Panc1 (cell line): ENCODE measurements at regions of chr4 and their contacts with region 1.

Region 1: DNA sequence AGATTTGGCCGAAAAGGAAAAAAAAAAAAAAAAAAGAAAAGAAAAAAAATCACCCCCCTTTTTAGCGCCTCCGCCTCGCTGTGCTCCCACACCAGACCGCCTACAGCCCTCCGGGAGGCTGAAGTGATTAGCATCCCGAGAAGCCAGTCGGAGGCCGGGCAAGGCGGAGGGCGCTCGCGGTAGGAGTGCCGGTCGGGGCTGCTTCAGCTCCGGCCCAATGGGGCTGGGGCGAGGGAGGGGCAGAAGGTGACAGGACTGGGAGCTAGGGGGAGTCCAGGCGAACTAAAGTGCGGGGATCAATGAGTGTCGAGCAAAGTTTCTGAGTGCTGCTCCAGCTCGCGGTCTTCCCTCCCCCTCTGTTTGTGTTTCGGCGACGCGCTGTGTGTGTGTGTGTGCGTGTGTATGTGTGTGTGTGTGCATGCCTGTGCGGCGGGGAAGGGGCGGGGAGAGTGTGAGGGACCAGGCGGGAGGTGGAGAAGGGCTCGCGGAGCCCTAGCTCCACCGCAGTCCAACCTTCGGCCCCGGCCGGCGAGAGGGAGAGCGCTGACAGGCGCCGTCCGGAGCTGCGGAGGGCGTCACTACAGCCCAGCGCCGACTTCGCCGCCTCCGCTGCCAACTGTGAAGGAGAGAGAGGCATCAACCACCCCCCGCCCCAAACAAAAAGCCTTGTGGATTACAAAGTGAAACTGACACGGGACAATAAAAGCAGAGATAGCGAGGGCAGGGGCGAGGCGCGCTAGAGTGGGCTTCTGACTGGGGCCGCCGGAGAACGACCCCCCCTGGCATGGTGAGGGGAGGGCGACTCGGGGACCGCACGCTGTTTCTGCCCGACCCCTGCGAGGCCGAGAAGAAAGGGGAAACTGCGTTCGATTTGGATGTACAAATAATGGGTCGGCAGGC is at the start of gene FAT4:
- DNase-seq: no peak
- ATAC-seq: peak; percentile 88
- H3K4me3 ChIP-seq: peak within 1 kb of the TSS; percentile 54 to 78
- H3K27ac ChIP-seq: peak within 1 kb of the TSS; percentile 76
- H3K4me1 ChIP-seq: peaks cover 18% of the 10 kb centered on the region
- H3K27me3 ChIP-seq: no peaks in the 10 kb centered on the region
- CTCF ChIP-seq: no peak
- total RNA-seq, gene FAT4: 11.8 TPM

Region 2: DNA sequence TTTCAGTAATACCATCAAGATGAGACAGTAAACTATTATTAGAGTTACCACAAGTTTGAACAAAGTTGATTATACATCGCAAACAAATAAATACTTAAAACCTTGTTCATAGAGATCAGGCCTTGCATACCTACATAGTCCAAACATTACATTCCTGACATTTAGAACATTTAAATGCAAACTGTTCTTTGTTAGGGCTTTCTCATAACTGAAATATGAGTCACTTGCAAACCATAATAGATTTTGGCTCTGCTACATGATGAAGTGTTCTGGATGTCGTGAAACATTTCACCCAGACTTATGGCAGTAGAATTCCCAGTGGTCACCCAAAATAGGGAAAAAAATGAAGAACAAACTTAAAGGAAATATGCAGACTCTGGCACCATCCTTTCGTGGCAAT is 74.8 kb after region 1 on chr4:
- CTCF ChIA-PET with region 1: no interaction called
- POLR2A ChIA-PET with region 1: no interaction called
- in situ Hi-C with region 1: no loop called
- intact Hi-C with region 1: no loop called
- DNase-seq: peak; percentile 68
- ATAC-seq: peak; percentile 94
- H3K4me3 ChIP-seq: peak overlapping the region in 1 of 2 experiments; percentile 12; a peak in 2 of 4 replicates
- H3K27ac ChIP-seq: peak overlapping the region; percentile 87
- H3K4me1 ChIP-seq: peaks cover 21% of the 10 kb centered on the region
- H3K27me3 ChIP-seq: no peaks in the 10 kb centered on the region
- CTCF ChIP-seq: no peak

Region 3: DNA sequence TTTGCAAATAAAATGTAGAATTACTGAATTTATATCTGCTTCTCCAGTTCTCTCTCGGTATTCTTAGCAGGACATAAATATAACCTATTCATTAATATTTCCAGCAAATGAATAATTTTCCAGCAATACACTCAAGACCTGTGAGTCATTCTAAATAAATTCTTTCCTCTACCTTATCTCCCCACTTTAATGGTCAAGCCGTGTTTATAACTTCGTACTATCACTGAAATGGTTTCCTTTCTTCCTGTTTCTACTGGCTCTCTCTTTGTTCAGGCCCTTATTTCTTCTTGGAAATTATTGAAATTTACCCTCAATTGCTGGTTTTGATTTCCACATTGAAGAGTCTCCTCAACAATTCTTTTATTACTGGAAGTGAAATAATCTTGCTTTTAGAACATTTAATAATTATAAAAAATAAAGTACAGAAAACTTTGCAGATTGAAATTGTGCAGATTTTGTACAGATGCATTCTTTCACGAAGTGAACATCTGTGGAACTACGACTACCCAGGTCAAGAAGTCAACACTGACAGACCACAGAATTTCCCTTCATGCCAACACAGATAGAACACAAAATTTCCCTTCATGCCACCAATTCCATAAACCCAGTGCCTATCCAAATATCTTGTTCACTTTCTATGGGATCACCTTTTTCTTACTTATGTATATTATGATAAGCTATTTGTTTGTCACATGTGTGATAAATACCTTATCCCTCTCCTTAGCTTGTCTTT is 205.5 kb after region 1 on chr4:
- CTCF ChIA-PET with region 1: no interaction called
- POLR2A ChIA-PET with region 1: no interaction called
- in situ Hi-C with region 1: no loop called
- intact Hi-C with region 1: loop called (anchors 5 kb)
- DNase-seq: no peak
- ATAC-seq: peak; percentile 75
- H3K4me3 ChIP-seq: no peak overlapping the region
- H3K27ac ChIP-seq: peak overlapping the region; percentile 63
- H3K4me1 ChIP-seq: peaks cover 8% of the 10 kb centered on the region
- H3K27me3 ChIP-seq: no peaks in the 10 kb centered on the region
- CTCF ChIP-seq: no peak

Region 4: GRCh38 chr4:125750828-125751466 is 436.0 kb after region 1 on chr4:
- CTCF ChIA-PET with region 1: interaction called, 6 read pairs
- POLR2A ChIA-PET with region 1: no interaction called
- in situ Hi-C with region 1: no loop called
- intact Hi-C with region 1: loop called (anchors 1 kb)
- DNase-seq: no peak
- ATAC-seq: peak; percentile 98
- H3K4me3 ChIP-seq: no peak overlapping the region
- H3K27ac ChIP-seq: peak overlapping the region; percentile 61
- H3K4me1 ChIP-seq: no peaks in the 10 kb centered on the region; the same call in 1 of the 2 replicates
- H3K27me3 ChIP-seq: no peaks in the 10 kb centered on the region
- CTCF ChIP-seq: peak; percentile 72

Region 5: DNA sequence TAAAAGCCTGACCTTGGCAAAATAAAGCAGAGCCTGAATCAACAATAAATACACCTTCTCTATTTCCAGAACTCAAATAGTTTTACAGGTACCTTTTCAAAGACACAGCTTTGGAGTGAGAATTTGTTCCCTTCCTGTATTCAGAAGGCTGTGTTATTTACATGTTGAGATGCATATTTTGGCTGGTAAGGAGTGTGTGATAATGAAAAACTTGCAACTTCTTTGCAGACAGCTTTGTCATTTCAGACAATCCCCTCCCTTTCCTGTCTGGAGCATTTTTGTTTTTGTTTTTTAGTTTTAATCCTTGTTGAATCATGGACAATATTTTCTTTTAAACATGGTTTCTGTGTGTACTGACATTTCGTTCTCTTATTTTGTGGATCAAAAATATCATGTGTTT is 493.6 kb after region 1 on chr4:
- CTCF ChIA-PET with region 1: no interaction called
- POLR2A ChIA-PET with region 1: interaction called, 11 read pairs
- in situ Hi-C with region 1: no loop called
- intact Hi-C with region 1: no loop called
- DNase-seq: no peak
- ATAC-seq: no peak
- H3K4me3 ChIP-seq: no peak overlapping the region
- H3K27ac ChIP-seq: no peak overlapping the region
- H3K4me1 ChIP-seq: no peaks in the 10 kb centered on the region
- H3K27me3 ChIP-seq: no peaks in the 10 kb centered on the region
- CTCF ChIP-seq: no peak

Region 6: GRCh38 chr4:125975861-125976397 is 661.0 kb after region 1 on chr4:
- CTCF ChIA-PET with region 1: no interaction called
- POLR2A ChIA-PET with region 1: no interaction called
- in situ Hi-C with region 1: no loop called
- intact Hi-C with region 1: loop called (anchors 5 kb)
- DNase-seq: no peak
- ATAC-seq: no peak
- H3K4me3 ChIP-seq: no peak overlapping the region
- H3K27ac ChIP-seq: no peak overlapping the region
- H3K4me1 ChIP-seq: no peaks in the 10 kb centered on the region
- H3K27me3 ChIP-seq: no peaks in the 10 kb centered on the region
- CTCF ChIP-seq: no peak

Region 7: GRCh38 chr4:126395664-126396063 is 1080.7 kb after region 1 on chr4:
- CTCF ChIA-PET with region 1: interaction called, 10 read pairs
- POLR2A ChIA-PET with region 1: no interaction called
- in situ Hi-C with region 1: no loop called
- intact Hi-C with region 1: no loop called
- DNase-seq: no peak
- ATAC-seq: no peak
- H3K4me3 ChIP-seq: no peak overlapping the region
- H3K27ac ChIP-seq: no peak overlapping the region
- H3K4me1 ChIP-seq: no peaks in the 10 kb centered on the region
- H3K27me3 ChIP-seq: no peaks in the 10 kb centered on the region
- CTCF ChIP-seq: no peak

Region 8: GRCh38 chr4:126604268-126604867 is 1289.4 kb after region 1 on chr4:
- CTCF ChIA-PET with region 1: no interaction called
- POLR2A ChIA-PET with region 1: no interaction called
- in situ Hi-C with region 1: no loop called
- intact Hi-C with region 1: loop called (anchors 10 kb)
- DNase-seq: no peak
- ATAC-seq: peak; percentile 81; the same call in 1 of the 2 replicates
- H3K4me3 ChIP-seq: no peak overlapping the region
- H3K27ac ChIP-seq: no peak overlapping the region
- H3K4me1 ChIP-seq: no peaks in the 10 kb centered on the region
- H3K27me3 ChIP-seq: no peaks in the 10 kb centered on the region
- CTCF ChIP-seq: peak; percentile 75; the same call in 1 of the 2 replicates